GM12878 (cell line): ENCODE measurements at regions of chr7 and their contacts with region 1.

Region 1: DNA sequence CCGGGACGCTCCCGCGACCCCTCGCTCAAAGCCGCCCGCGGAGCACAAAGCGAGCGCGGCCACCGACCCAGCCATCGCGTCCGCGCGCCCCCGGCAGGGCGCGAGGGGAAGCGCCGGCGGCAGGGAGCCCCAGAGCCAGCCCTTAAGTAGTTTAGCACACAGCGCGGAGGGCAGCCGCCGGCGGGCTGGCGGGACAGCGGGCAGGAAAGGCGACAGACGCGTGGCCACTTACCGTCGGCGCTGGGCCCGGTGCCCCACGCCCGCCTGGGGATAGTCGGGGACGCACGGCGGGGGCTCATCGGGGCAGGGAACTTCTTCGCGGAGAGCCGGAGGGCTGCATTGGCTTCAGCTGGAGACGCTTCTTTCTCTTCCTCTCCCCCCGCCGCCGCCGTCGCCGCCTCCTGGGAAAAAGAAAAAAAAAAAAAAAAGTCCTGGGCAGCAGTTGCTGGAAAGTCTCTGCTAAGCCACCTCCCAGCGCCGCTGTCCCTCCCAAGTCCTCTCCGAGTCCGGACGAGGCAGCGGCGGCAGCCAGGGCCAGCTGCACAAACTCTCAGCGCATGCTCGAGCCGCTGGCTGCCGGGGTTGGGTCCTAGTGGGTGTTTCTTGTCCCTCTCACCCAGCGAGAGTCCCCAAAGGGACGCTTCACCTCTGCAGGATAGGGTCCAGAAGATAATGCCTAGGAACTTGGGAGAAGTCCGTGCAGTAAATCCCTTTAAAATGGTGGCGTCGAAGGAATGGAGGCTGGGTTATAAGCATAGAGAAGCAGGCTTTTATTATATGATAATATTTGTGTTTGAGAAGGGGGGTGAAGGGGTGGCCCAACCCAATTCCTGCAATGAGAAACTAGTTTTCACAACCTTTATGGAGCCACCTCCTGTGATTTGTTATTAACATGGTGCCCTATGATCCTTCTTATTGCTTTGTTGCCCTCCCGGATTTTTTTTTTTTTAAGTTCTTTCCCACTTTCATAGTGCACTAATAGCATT is at the start of gene TSPAN12:
- DNase-seq: no peak
- ATAC-seq: peak; percentile 81
- H3K4me3 ChIP-seq: peak within 1 kb of the TSS; percentile 70
- H3K27ac ChIP-seq: 0 out of 2 replicates have a peak within 1 kb of the TSS, but pooled peaks have one; percentile 46
- H3K4me1 ChIP-seq: no peaks in the 10 kb centered on the region
- H3K27me3 ChIP-seq: peaks cover 0 to 4% of the 10 kb centered on the region in 2 experiments; a peak in 1 of 4 replicates
- CTCF ChIP-seq: peak; percentile 67 to 79 (median 75); a peak in 5 of 6 replicates
- EP300 ChIP-seq: no peak
- POLR2A ChIP-seq: peak; percentile 66
- RAD21 ChIP-seq: peak; percentile 61
- polyA plus RNA-seq, gene TSPAN12: 0.75 to 1.3 TPM

Region 2: DNA sequence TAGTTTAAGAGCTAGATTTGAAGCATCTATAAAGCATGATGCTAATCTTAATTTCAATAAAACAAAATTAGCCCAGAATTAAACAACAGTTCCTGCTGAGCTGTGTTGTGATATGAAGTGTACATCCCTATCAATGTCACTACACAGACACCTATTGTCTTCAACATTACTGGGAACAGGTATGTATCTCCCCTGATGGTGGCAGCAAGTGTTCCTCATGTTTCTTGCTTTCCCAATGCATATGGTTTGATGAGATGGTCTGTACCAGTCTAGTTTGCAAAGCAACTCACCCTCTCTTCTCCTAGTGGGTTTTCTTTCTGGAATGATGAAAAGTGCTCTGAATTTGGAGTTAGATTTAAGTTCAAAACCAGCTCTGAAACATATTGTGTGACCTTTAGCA is 38.0 kb before region 1 on chr7:
- CTCF ChIA-PET with region 1: interaction called, 4 read pairs
- POLR2A ChIA-PET with region 1: interaction called, 4 read pairs
- RAD21 ChIA-PET with region 1: no interaction called
- SMC1A ChIA-PET with region 1: interaction called, 7 read pairs
- in situ Hi-C with region 1: no loop called
- intact Hi-C with region 1: loop called (anchors 5 kb)
- DNase-seq: no peak
- ATAC-seq: peak; percentile 68
- H3K4me3 ChIP-seq: no peak overlapping the region
- H3K27ac ChIP-seq: no peak overlapping the region
- H3K4me1 ChIP-seq: no peaks in the 10 kb centered on the region
- H3K27me3 ChIP-seq: no peaks in the 10 kb centered on the region
- CTCF ChIP-seq: peak in 1 of 3 experiments; percentile 58; a peak in 2 of 6 replicates
- EP300 ChIP-seq: no peak
- POLR2A ChIP-seq: no peak
- RAD21 ChIP-seq: peak; percentile 37; the same call in 1 of the 2 replicates

Region 3: GRCh38 chr7:120838281-120838682 is 19.6 kb before region 1 on chr7:
- CTCF ChIA-PET with region 1: interaction called, 20 read pairs
- POLR2A ChIA-PET with region 1: interaction called, 39 read pairs
- RAD21 ChIA-PET with region 1: interaction called, 57 read pairs
- SMC1A ChIA-PET with region 1: interaction called, 122 read pairs
- in situ Hi-C with region 1: no loop called
- intact Hi-C with region 1: loop called (anchors 1 kb)
- DNase-seq: peak; percentile 68
- ATAC-seq: peak; percentile 76
- H3K4me3 ChIP-seq: no peak overlapping the region
- H3K27ac ChIP-seq: peak overlapping the region; percentile 39
- H3K4me1 ChIP-seq: peaks cover 7% of the 10 kb centered on the region; the same call in 1 of the 2 replicates
- H3K27me3 ChIP-seq: no peaks in the 10 kb centered on the region
- CTCF ChIP-seq: no peak
- EP300 ChIP-seq: peak; percentile 55 to 56; a peak in 3 of 4 replicates
- POLR2A ChIP-seq: no peak
- RAD21 ChIP-seq: no peak

Region 4: DNA sequence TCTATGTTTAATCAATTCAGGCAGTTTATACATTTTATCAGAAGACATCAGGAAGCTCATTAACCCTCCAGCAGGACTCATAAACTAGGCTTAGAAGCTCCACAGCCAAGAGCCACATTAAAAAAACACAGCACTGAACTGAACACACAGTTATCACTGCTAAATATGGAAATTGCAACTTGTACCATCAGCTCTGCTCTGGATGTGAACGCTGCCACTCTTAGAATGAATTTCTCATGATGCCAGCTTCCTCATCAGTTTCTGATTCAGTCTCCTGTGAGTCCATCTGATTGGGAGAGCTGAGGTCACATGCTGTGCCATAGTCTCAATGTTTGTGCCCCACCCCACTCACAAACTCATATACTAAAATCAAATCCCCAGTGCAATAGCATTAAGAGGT is 75.6 kb after region 1 on chr7:
- CTCF ChIA-PET with region 1: interaction called, 6 read pairs
- POLR2A ChIA-PET with region 1: interaction called, 5 read pairs
- RAD21 ChIA-PET with region 1: interaction called, 7 read pairs
- SMC1A ChIA-PET with region 1: interaction called, 15 read pairs
- in situ Hi-C with region 1: no loop called
- intact Hi-C with region 1: loop called (anchors 1 kb)
- DNase-seq: no peak
- ATAC-seq: peak; percentile 80
- H3K4me3 ChIP-seq: no peak overlapping the region
- H3K27ac ChIP-seq: no peak overlapping the region
- H3K4me1 ChIP-seq: no peaks in the 10 kb centered on the region
- H3K27me3 ChIP-seq: no peaks in the 10 kb centered on the region
- CTCF ChIP-seq: no peak
- EP300 ChIP-seq: no peak
- POLR2A ChIP-seq: no peak
- RAD21 ChIP-seq: no peak

Region 5: DNA sequence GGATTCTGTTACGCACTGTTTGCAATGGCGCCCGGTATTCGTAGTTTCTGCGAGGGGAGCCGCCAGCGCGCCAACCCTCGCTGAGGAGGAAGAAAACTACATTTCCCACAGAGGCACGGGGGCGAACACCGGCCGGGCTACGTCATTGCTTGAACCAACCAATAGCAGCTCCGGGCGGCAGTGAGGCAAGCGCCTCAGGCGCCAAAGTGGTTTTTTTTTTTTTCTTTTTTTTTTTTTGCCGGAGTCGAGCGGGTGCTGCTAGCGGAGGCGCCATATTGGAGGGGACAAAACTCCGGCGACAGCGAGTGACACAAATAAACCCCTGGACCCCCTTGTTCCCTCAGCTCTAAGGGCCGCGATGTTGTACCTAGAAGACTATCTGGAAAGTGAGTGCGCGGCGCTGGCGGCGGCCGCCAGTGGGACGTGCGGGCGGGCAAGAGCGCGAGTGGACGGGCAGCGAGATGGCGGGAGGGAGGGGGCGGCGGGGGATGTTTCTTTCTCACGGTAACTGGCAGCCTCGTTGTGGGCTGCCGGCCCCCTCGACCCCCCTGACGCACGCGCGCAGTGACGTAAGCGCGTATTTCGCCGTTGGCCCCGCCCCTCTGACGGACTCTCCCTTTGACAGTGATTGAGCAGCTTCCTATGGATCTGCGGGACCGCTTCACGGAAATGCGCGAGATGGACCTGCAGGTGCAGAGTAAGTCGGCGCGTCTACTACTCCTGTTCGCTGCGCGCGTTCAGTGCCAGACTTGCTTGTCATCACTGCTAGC is 92.8 kb after region 1 on chr7 and contains the start of gene ING3:
- CTCF ChIA-PET with region 1: no interaction called
- POLR2A ChIA-PET with region 1: interaction called, 12 read pairs
- RAD21 ChIA-PET with region 1: interaction called, 3 read pairs
- SMC1A ChIA-PET with region 1: interaction called, 3 read pairs
- in situ Hi-C with region 1: no loop called
- intact Hi-C with region 1: loop called (anchors 2 kb)
- DNase-seq: peak; percentile 92
- ATAC-seq: peak; percentile 93
- H3K4me3 ChIP-seq: peak within 1 kb of the TSS; percentile 90
- H3K27ac ChIP-seq: peak within 1 kb of the TSS; percentile 97
- H3K4me1 ChIP-seq: 0 out of 2 replicates have a peak, but pooled peaks cover 5% of the 10 kb centered on the region
- H3K27me3 ChIP-seq: no peaks in the 10 kb centered on the region
- CTCF ChIP-seq: no peak
- EP300 ChIP-seq: 0 out of 4 replicates have a peak, but pooled peaks of 1 of the 2 experiments have one; percentile 15
- POLR2A ChIP-seq: peak; percentile 89
- RAD21 ChIP-seq: no peak
- polyA plus RNA-seq, gene ING3: 44.3 to 60.8 TPM